Activated CD4-positive, alpha-beta memory T cell treated with anti-CD3 and anti-CD28 coated beads for 36 hours (primary cell): ENCODE measurements at regions of chr2 and their contacts with region 1.

Region 1: DNA sequence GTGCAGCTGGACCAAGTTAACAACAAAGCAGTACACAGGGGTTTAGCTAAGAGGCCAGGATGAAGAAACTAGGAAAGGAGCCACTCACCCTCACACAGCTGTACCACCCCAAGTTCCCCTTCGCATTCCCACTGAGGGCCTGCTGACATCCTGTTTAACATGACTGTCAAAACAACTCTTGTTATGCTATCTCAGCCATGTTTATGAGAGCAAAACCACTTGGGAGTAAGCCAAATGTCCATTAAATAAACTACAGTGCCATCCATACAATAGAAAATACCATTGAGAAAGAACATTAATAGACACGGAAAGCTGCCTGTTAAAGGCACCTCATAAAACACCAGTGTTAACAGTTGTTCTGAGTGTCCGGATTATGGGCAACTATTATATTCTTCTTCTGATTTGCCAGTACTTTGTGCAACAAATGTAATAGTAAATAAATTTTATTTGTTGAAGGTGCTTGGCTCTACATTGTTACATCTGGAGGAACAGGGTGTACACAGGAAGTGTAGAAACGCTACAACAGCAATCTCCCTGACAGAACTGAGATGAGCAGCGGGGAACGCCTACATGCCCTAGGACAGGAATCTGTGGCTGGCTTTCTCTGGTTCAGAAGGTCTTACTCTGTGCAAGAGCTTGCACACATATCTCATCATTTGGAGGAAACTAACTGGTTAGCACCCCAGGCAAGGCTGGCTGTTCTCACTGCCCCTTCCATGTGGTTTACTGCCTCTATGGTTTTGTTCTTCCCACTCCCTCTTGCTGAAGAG is 85.6 kb downstream of the EHD3 start:
- DNase-seq: peak; percentile 65
- H3K4me3 Mint-ChIP-seq: no peak overlapping the region
- H3K27ac Mint-ChIP-seq: no peak overlapping the region
- H3K4me1 Mint-ChIP-seq: peaks cover 57% of the 10 kb centered on the region
- H3K27me3 Mint-ChIP-seq: no peaks in the 10 kb centered on the region

Region 2: GRCh38 chr2:31233741-31234682 is 85.6 kb before region 1 on chr2 and contains the start of gene EHD3:
- CTCF ChIA-PET with region 1: no interaction called
- POLR2A ChIA-PET with region 1: no interaction called
- intact Hi-C with region 1: loop called (anchors 2 kb)
- DNase-seq: peak; percentile 90
- H3K4me3 Mint-ChIP-seq: peak within 1 kb of the TSS; percentile 69
- H3K27ac Mint-ChIP-seq: no peak within 1 kb of the TSS
- H3K4me1 Mint-ChIP-seq: peaks cover 16% of the 10 kb centered on the region
- H3K27me3 Mint-ChIP-seq: peaks cover 3% of the 10 kb centered on the region
- total RNA-seq, gene EHD3: 1.4 to 1.5 TPM

Region 3: DNA sequence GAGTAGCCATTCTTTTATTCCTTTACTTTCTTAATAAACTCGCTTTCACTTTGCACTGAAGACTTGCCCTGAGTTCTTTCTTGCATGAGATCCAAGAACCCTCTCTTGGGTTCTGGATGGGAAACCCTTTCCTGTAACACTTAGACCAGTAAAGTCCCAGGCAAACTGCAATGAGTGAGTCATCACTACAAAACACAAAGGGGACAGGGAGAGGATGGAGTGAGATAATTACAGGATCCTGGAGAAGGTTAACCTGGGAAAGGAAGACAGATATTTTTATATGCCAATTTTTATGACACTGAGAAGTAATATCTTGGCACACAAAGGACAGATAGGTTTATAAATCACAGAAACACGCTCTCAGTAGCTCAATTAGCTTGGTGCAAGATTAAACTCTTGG is 37.0 kb before region 1 on chr2:
- CTCF ChIA-PET with region 1: no interaction called
- POLR2A ChIA-PET with region 1: no interaction called
- intact Hi-C with region 1: loop called (anchors 5 kb)
- DNase-seq: no peak
- H3K4me3 Mint-ChIP-seq: no peak overlapping the region
- H3K27ac Mint-ChIP-seq: no peak overlapping the region
- H3K4me1 Mint-ChIP-seq: peaks cover 9% of the 10 kb centered on the region
- H3K27me3 Mint-ChIP-seq: no peaks in the 10 kb centered on the region

Region 4: DNA sequence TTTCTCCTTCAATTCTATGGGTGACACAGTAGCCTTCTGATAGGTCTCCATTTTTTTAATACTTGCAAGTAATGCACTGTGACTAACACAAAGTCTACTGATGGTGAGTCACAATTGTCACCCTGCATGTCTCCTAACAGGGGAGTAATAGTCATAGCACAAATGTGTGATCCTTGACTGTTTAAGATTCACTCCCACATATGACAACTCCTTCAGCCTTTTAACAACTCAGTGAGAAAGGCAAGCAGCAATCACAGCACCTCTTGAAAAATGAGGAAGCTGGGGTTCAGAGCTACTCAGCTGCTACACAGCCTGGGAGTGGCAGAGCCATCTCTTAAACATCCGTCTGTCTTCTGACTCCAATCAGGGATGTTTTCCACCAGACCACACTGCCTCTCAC is 21.8 kb before region 1 on chr2:
- CTCF ChIA-PET with region 1: no interaction called
- POLR2A ChIA-PET with region 1: interaction called, 3 read pairs
- intact Hi-C with region 1: loop called (anchors 2 kb)
- DNase-seq: peak; percentile 24
- H3K4me3 Mint-ChIP-seq: no peak overlapping the region
- H3K27ac Mint-ChIP-seq: no peak overlapping the region
- H3K4me1 Mint-ChIP-seq: peaks cover 6% of the 10 kb centered on the region
- H3K27me3 Mint-ChIP-seq: peaks cover 5% of the 10 kb centered on the region